ENCODE measurements at regions of chr14 and their contacts with region 1.

Region 1: DNA sequence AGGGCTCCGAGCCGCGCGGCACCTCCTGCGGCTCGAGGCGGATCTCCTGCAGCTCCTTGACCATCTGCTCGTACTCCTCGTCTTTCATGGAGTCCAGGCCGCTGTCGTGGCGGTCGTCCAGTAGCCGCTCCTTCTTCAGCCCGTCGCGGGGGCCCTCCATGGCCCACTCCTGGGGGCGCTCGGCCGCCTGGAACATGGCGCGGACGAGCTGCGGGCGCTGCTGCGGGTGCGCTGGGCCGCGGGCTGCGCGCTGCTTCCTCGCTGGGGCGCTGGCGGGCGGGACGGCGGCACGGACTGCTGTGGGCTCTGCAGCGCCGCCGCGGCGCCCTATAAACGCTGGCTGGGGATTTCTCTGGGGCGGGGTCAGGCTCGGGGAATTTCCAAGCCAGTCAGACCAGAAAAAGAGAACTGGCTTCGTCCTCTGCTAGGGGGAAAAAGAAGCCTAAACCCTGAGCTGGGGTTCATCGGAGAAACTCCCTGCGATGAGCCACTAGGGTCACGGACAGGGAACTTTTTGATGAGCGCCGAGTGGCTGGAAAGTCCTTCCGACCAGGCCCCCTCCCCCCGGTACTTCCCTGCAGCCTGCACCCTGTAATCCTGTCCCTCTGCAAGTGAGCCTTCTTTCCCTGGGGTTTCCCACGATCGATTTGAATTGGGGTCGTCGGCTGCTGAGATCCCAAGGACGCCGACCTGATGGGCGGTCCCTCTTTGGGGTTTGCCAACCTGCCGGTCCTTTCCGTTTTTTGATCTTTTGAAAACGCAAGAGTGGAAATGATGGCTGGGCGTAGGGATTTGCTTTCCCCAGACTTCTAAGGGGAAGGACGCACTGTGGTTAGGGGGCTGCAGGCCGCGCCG is at the start of gene NFKBIA:
- DNase-seq: peak; percentile 95
- ATAC-seq: peak; percentile 69
- H3K4me3 Mint-ChIP-seq: peak within 1 kb of the TSS; percentile 94
- H3K27ac Mint-ChIP-seq: peak within 1 kb of the TSS; percentile 97
- H3K4me1 Mint-ChIP-seq: peaks cover 30% of the 10 kb centered on the region
- H3K27me3 Mint-ChIP-seq: no peaks in the 10 kb centered on the region
- CTCF ChIP-seq: no peak
- total RNA-seq, gene NFKBIA: 218 to 227 TPM

Region 2: DNA sequence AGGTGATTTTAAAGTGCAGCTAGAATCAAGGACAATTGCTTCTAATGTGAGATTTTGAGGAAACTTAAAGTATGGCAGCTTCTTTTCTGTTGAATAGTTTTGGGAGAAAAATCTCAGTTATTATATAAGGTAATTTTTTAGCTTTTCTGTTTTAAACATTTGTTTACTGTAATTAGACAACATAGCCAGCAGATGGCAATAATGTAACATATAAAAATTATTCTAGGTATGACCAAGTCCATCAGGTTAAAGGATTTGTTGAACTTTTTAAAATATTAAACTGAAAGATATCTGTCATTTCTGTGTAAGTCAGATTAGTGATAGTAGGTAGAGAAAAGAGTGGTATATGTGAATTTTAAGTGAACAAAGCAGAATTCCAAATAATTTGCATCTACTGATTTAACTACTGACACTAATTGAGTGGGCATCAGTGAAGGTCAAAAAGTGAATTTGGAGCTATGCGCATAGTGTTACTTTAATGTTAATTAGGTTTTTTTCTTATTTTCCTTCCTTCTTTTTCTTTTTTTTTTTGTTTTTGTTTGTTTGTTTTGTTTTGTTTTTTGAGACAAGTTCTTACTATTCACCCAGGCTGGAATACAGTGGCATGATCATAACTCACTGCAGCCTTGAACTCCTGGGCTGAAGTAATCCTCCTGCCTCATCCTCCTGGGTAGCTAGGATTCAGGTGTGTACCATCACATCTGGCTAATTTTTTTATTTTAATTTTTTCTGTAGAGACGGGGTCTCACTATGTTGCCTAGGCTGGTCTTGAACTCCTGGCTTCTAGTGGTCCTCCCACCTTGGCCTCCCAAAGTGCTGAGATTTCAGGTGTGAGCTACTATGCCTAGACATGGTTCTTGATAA is 263.7 kb before region 1 on chr14:
- CTCF ChIA-PET with region 1: interaction called, 219 read pairs
- POLR2A ChIA-PET with region 1: interaction called, 8 read pairs
- intact Hi-C with region 1: no loop called
- DNase-seq: no peak
- ATAC-seq: peak; percentile 37
- H3K4me3 Mint-ChIP-seq: no peak overlapping the region
- H3K27ac Mint-ChIP-seq: no peak overlapping the region
- H3K4me1 Mint-ChIP-seq: peaks cover 13% of the 10 kb centered on the region
- H3K27me3 Mint-ChIP-seq: no peaks in the 10 kb centered on the region
- CTCF ChIP-seq: peak; percentile 61

Region 3: DNA sequence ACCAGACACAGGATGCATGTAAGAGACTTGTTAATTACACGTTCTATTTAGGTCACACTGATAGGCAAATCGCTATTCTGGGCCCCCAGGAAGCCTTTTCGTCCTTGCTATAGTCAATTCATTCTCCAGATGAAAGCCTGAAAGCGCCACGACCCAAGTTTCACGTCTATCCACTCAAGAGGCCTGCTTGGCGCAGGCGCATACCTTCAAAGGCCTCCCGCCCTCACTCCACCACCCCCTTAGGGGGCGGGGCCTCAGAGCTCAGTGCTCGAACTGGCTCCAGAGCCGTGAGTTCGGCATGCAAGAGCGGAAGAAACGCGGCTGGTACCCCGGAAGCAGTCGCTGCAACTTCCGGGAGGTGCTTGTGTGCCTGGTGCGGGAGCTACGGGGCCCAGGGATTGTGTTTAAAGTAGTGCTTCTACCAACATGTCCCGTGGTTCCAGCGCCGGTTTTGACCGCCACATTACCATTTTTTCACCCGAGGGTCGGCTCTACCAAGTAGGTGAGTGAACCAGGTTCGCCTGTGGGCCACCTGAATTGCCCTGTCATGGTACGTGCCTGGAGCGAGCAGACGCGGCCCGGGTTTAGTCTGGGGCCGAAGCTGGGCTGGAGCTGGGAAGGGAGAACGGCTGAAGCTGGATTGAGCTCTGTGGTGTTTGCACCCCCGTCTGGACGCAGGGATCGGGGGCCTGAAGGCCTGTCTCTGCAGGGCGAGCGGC is 112.5 kb before region 1 on chr14 and contains the start of gene PSMA6:
- CTCF ChIA-PET with region 1: interaction called, 27 read pairs
- POLR2A ChIA-PET with region 1: interaction called, 222 read pairs
- intact Hi-C with region 1: loop called (anchors 2 kb)
- DNase-seq: peak; percentile 99
- ATAC-seq: peak; percentile 92
- H3K4me3 Mint-ChIP-seq: peak within 1 kb of the TSS; percentile 97
- H3K27ac Mint-ChIP-seq: peak within 1 kb of the TSS; percentile 98
- H3K4me1 Mint-ChIP-seq: peaks cover 50% of the 10 kb centered on the region
- H3K27me3 Mint-ChIP-seq: no peaks in the 10 kb centered on the region
- CTCF ChIP-seq: no peak
- total RNA-seq, gene PSMA6: 361 to 393 TPM

Region 4: DNA sequence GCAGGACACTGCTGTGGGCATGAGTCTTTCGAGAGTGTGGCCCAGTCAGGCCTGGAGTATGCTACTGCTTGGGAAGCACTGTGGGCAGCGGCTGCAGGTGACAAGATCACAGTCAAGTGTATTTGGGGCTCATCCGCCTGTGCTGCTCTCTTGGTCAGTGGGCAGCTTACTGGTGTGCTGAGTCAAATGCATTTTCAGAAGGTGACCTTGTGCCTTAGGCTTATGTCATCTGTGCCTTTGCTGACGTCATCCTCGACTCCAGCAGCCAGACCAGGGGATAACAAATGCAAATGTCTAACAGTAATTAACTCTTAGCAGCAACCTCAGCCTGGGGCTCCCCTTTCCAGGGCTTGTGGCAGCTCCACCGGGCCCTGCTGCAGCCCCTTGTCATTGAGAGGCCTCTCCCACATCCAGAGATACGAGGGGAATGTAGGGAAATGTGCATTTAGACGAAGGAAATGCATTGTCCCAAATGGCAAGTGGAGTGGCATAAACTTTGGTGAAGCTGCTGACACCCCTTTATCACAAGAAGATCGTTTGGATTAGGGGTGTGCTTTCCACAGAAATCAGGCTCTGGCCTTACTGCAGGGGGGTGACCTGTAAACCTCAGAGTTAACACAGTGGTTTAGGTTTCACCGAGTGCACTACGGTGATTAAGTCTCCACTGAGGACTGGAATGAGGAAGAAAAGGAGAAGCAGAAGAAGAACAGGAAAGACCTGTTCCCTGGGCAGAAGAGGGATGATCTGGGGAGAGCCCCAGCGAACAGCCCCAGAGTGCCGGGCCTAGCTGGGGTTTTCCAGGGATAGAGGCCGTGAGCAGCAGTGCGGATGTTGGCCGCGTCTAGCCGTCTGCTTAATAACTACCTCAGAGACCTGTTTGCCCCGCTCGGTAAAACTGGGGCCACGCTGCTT is 72.8 kb before region 1 on chr14:
- CTCF ChIA-PET with region 1: interaction called, 18 read pairs
- POLR2A ChIA-PET with region 1: interaction called, 157 read pairs
- intact Hi-C with region 1: no loop called
- DNase-seq: no peak
- ATAC-seq: no peak
- H3K4me3 Mint-ChIP-seq: no peak overlapping the region
- H3K27ac Mint-ChIP-seq: peak overlapping the region; percentile 95
- H3K4me1 Mint-ChIP-seq: peaks cover 30% of the 10 kb centered on the region
- H3K27me3 Mint-ChIP-seq: no peaks in the 10 kb centered on the region
- CTCF ChIP-seq: no peak

Region 5: DNA sequence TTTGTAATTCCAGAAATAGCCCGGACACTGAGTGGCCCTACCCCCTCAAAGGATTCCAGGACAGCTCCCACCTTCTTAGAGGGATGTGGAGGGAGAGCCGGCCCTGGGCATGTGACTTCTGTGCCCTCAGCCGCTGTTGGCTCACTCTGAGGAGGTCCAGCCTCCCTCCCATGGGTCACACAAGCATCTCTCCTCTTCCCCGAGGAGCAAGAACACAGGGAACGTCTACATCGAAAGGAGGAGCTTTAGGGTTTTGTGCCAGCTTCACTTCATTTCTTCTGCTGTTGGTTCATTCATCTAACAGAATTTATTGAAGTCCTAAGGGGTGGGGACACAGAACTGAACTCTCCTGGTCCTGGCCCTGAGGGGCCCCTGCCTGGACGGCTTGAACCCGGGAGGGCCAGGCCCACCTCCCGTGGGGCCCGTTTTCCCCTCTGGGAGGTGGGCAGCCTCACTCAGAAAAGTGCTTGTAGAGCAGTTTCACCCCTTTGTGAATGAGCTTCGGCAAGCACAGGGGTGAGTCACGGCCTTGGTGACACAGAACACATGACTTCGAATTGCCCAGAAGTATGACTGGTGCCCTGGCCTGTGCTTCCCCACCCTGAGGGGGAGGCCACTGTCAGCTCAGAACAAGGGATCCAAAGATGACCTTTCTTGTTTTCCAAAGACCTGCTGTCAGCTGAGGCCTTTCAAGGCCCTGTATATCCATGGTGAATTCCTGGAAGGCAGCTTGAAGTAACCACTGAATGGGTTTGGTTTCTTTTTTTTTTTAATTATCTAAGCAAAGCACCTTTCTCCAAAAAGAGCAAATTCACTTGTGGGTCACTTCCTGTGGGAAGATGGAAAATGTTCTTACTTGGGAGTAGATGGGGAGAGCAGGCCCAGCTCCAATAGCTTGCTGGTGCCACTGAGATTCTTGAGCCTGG is 39.3 kb before region 1 on chr14:
- CTCF ChIA-PET with region 1: interaction called, 14 read pairs
- POLR2A ChIA-PET with region 1: interaction called, 150 read pairs
- intact Hi-C with region 1: loop called (anchors 5 kb)
- DNase-seq: peak; percentile 95
- ATAC-seq: peak; percentile 89
- H3K4me3 Mint-ChIP-seq: peak overlapping the region; percentile 49
- H3K27ac Mint-ChIP-seq: peak overlapping the region; percentile 94
- H3K4me1 Mint-ChIP-seq: peaks cover 68% of the 10 kb centered on the region
- H3K27me3 Mint-ChIP-seq: no peaks in the 10 kb centered on the region
- CTCF ChIP-seq: no peak

Region 6: DNA sequence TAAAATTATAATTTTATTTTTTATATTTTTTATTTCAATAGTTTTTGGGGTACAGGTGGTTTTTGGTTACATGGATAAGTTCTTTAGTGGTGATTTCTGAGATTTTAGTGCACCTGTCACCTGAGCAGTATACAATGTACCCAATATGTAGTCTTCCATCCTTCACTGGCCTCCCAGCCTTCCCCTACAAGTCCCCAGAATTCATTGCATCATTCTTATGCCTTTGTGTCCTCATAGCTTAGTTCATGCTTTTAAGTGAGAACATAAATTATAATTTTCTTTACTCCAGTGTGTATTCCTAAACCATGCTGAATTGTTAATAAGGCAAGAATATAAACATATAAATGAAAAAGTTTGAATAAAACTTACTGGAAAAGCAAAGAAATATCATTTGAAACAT is 18.9 kb after region 1 on chr14:
- CTCF ChIA-PET with region 1: interaction called, 88 read pairs
- POLR2A ChIA-PET with region 1: interaction called, 207 read pairs
- intact Hi-C with region 1: no loop called
- DNase-seq: no peak
- ATAC-seq: no peak
- H3K4me3 Mint-ChIP-seq: no peak overlapping the region
- H3K27ac Mint-ChIP-seq: no peak overlapping the region
- H3K4me1 Mint-ChIP-seq: peaks cover 27% of the 10 kb centered on the region
- H3K27me3 Mint-ChIP-seq: no peaks in the 10 kb centered on the region
- CTCF ChIP-seq: no peak

Region 7: GRCh38 chr14:35678403-35679028 is 273.8 kb after region 1 on chr14:
- CTCF ChIA-PET with region 1: no interaction called
- POLR2A ChIA-PET with region 1: no interaction called
- intact Hi-C with region 1: no loop called
- DNase-seq: no peak
- ATAC-seq: no peak
- H3K4me3 Mint-ChIP-seq: no peak overlapping the region
- H3K27ac Mint-ChIP-seq: no peak overlapping the region
- H3K4me1 Mint-ChIP-seq: no peaks in the 10 kb centered on the region
- H3K27me3 Mint-ChIP-seq: no peaks in the 10 kb centered on the region
- CTCF ChIP-seq: no peak

Measured in activated CD8-positive, alpha-beta T cell treated with anti-CD3 and anti-CD28 coated beads for 36 hours (primary cell).